ENCODE measurements at regions of chr6 and their contacts with region 1.

Region 1: DNA sequence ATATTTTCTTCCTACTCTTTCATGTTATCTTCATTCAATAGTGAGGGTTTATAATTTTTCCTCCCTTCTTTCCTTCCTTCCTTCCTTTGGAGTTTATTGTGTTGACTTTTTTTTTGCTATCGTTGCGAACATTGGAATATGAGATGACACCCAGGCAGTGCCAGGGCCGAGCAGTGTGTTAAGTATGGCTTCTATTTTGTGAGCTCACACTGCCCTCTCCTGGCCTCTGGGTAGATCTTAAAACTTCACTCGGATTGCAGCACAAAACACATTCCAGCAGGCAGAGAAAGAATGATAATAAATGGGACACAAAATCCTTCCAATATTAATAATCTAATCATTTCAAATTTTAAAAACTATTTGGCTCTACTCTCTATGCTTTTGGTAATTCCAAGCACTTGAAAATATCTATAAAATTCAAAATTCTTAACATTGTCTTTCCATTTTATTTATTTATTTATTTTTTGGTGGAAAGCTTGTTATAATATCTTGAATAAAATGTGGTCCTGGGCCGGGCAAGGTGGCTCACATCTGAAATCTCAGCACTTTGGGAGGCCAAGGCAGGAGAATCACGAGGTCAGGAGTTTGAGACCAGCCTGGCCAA is 147.4 kb upstream of the OLIG3 start:
- DNase-seq: peak; percentile 41 to 84 (median 54)
- ATAC-seq: peak; percentile 84
- H3K4me3 ChIP-seq: no peak overlapping the region
- H3K4me3 Mint-ChIP-seq: no peak overlapping the region
- H3K27ac ChIP-seq: no peak overlapping the region
- H3K27ac Mint-ChIP-seq: no peak overlapping the region
- H3K4me1 ChIP-seq: peaks cover 6% of the 10 kb centered on the region
- H3K4me1 Mint-ChIP-seq: peaks cover 13% of the 10 kb centered on the region
- H3K27me3 ChIP-seq: no peaks in the 10 kb centered on the region
- H3K27me3 Mint-ChIP-seq: peaks cover 11% of the 10 kb centered on the region
- CTCF ChIP-seq: peak; percentile 85

Region 2: GRCh38 chr6:136967876-136968752 is 673.5 kb before region 1 on chr6:
- CTCF ChIA-PET with region 1: no interaction called
- POLR2A ChIA-PET with region 1: no interaction called
- intact Hi-C with region 1: loop called (anchors 1 to 2 kb)
- DNase-seq: peak; percentile 26 to 76 (median 42)
- ATAC-seq: peak; percentile 70
- H3K4me3 ChIP-seq: no peak overlapping the region
- H3K4me3 Mint-ChIP-seq: no peak overlapping the region
- H3K27ac ChIP-seq: no peak overlapping the region
- H3K27ac Mint-ChIP-seq: no peak overlapping the region
- H3K4me1 ChIP-seq: peaks cover 7% of the 10 kb centered on the region
- H3K4me1 Mint-ChIP-seq: no peaks in the 10 kb centered on the region
- H3K27me3 ChIP-seq: peaks cover 12 to 13% of the 10 kb centered on the region in 2 experiments
- H3K27me3 Mint-ChIP-seq: peaks cover 35% of the 10 kb centered on the region
- CTCF ChIP-seq: peak; percentile 69

Region 3: GRCh38 chr6:137094411-137095008 is 547.1 kb before region 1 on chr6:
- CTCF ChIA-PET with region 1: interaction called, 7 read pairs
- POLR2A ChIA-PET with region 1: no interaction called
- intact Hi-C with region 1: loop called (anchors 1 to 2 kb)
- DNase-seq: peak; percentile 22 to 80 (median 37)
- ATAC-seq: no peak
- H3K4me3 ChIP-seq: no peak overlapping the region
- H3K4me3 Mint-ChIP-seq: no peak overlapping the region
- H3K27ac ChIP-seq: no peak overlapping the region
- H3K27ac Mint-ChIP-seq: no peak overlapping the region
- H3K4me1 ChIP-seq: peaks cover 9% of the 10 kb centered on the region
- H3K4me1 Mint-ChIP-seq: peaks cover 12% of the 10 kb centered on the region
- H3K27me3 ChIP-seq: no peaks in the 10 kb centered on the region
- H3K27me3 Mint-ChIP-seq: peaks cover 5% of the 10 kb centered on the region
- CTCF ChIP-seq: peak; percentile 71

Region 4: GRCh38 chr6:137341681-137342195 is 299.8 kb before region 1 on chr6:
- CTCF ChIA-PET with region 1: no interaction called
- POLR2A ChIA-PET with region 1: no interaction called
- intact Hi-C with region 1: loop called (anchors 1 kb)
- DNase-seq: peak; percentile 29 to 80 (median 50)
- ATAC-seq: peak; percentile 39
- H3K4me3 ChIP-seq: no peak overlapping the region
- H3K4me3 Mint-ChIP-seq: peak overlapping the region; percentile 81
- H3K27ac ChIP-seq: no peak overlapping the region
- H3K27ac Mint-ChIP-seq: no peak overlapping the region
- H3K4me1 ChIP-seq: peaks cover 12% of the 10 kb centered on the region
- H3K4me1 Mint-ChIP-seq: peaks cover 18% of the 10 kb centered on the region
- H3K27me3 ChIP-seq: peaks cover 0 to 6% of the 10 kb centered on the region in 2 experiments
- H3K27me3 Mint-ChIP-seq: peaks cover 9% of the 10 kb centered on the region
- CTCF ChIP-seq: peak; percentile 72

Region 5: GRCh38 chr6:137475103-137475502 is 166.5 kb before region 1 on chr6:
- CTCF ChIA-PET with region 1: interaction called, 3 read pairs
- POLR2A ChIA-PET with region 1: no interaction called
- intact Hi-C with region 1: loop called (anchors 2 to 5 kb)
- DNase-seq: peak in 3 of 14 experiments; percentile 31 to 38 (median 31)
- ATAC-seq: no peak
- H3K4me3 ChIP-seq: no peak overlapping the region
- H3K4me3 Mint-ChIP-seq: no peak overlapping the region
- H3K27ac ChIP-seq: no peak overlapping the region
- H3K27ac Mint-ChIP-seq: no peak overlapping the region
- H3K4me1 ChIP-seq: no peaks in the 10 kb centered on the region
- H3K4me1 Mint-ChIP-seq: no peaks in the 10 kb centered on the region
- H3K27me3 ChIP-seq: peaks cover 0 to 4% of the 10 kb centered on the region in 2 experiments
- H3K27me3 Mint-ChIP-seq: peaks cover 51% of the 10 kb centered on the region
- CTCF ChIP-seq: peak; percentile 48

Measured in CD4-positive, alpha-beta T cell (primary cell).